Prostate gland (tissue), 2 donors: ENCODE measurements at regions of chr20 and their contacts with region 1.

Region 1: GRCh38 chr20:45890985-45891983 is at the starts of genes CTSA and NEURL2:
- DNase-seq: peak; percentile 90
- H3K4me3 ChIP-seq: peak within 1 kb of the TSS; percentile 71 to 74
- H3K27ac ChIP-seq: peak within 1 kb of the TSS; percentile 77 to 81
- H3K4me1 ChIP-seq: peaks cover 6% of the 10 kb centered on the region
- H3K27me3 ChIP-seq: no peaks in the 10 kb centered on the region
- CTCF ChIP-seq: peak in 2 of 4 experiments; percentile 28 to 35
- POLR2A ChIP-seq: peak; percentile 56
- total RNA-seq, gene CTSA: 37.9 to 215 TPM
- total RNA-seq, gene NEURL2: 9.8 to 11.3 TPM

Region 2: GRCh38 chr20:45934586-45935415 is 43.5 kb after region 1 on chr20 and contains the start of gene PCIF1:
- intact Hi-C with region 1: loop called (anchors 2 kb)
- DNase-seq: peak; percentile 98
- H3K4me3 ChIP-seq: peak within 1 kb of the TSS; percentile 90 to 100
- H3K27ac ChIP-seq: peak within 1 kb of the TSS; percentile 99 to 100
- H3K4me1 ChIP-seq: no peaks in the 10 kb centered on the region
- H3K27me3 ChIP-seq: no peaks in the 10 kb centered on the region
- CTCF ChIP-seq: peak in 2 of 4 experiments; percentile 36 to 46
- POLR2A ChIP-seq: peak; percentile 92
- total RNA-seq, gene PCIF1: 39.8 to 54.9 TPM

Region 3: DNA sequence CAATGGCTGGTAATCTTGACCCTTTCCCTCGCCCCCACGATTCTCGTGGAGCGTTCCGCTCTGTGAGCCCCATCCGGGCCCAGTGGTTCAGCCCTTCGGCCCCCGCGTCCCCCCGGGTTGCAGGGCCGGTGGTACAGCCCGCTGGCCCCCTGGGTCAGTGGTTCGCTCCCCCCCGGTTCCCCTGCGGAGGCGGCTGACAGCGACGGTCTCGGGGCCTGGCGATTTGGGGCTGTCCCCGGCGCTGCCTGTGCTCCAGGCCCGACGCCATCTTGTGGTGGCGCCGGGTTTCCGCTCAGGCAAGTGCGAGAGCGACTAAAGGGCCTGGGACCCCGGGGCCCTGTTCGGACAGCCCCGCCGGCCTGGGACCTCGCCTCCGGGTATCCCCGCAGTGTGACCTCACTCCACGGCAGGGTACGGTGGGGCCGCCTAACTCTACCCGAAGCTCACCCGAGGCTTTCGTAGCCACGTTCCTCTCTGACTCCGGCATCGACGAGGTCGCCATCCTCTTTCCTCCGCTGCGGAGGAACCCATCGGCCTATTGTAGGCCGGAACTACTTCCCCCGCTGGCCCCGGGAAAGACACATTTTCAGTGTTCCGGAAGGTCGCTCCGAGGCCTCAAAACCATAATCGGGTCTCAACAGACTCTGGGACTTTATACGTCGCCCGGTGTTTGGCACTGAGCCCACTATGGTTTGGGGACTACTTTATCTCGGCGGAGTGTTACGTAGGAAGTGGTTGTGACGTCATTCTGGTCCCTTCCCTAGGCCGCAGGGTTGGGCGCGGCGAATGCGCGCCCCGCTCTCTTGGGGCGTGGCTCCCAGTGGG is 80.6 kb after region 1 on chr20 and contains the start of gene ZNF335:
- intact Hi-C with region 1: loop called (anchors 10 kb)
- DNase-seq: peak; percentile 92
- H3K4me3 ChIP-seq: peak within 1 kb of the TSS; percentile 65 to 73
- H3K27ac ChIP-seq: peak within 1 kb of the TSS; percentile 100
- H3K4me1 ChIP-seq: no peaks in the 10 kb centered on the region
- H3K27me3 ChIP-seq: no peaks in the 10 kb centered on the region
- CTCF ChIP-seq: peak; percentile 44 to 77 (median 65)
- POLR2A ChIP-seq: peak; percentile 71
- total RNA-seq, gene ZNF335: 21.4 to 43.4 TPM